ENCODE measurements at regions of chr6 and their contacts with region 1.

Region 1: DNA sequence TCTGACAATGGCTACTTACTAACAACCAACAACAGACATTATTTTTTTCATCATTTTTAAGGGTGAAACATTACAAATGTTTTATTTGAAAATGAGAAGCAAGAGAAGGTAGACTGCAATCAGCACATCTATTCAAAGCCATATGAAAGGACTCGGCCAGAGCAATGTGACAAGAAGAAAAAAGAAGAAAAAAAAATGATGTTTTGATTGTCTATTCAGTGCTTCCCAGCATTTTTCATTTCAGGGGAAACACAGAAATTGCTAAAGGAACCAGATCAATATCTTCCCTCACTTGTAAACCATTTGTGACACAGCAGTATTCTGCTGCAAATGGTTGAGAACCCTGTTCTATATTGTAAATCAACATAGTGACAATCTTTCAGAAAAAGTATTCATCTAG is 270.7 kb downstream of the EYS start:
- DNase-seq: no peak
- ATAC-seq: no peak
- H3K4me3 ChIP-seq: no peak overlapping the region
- H3K27ac ChIP-seq: no peak overlapping the region
- H3K4me1 ChIP-seq: no peaks in the 10 kb centered on the region
- H3K27me3 ChIP-seq: no peaks in the 10 kb centered on the region

Region 2: DNA sequence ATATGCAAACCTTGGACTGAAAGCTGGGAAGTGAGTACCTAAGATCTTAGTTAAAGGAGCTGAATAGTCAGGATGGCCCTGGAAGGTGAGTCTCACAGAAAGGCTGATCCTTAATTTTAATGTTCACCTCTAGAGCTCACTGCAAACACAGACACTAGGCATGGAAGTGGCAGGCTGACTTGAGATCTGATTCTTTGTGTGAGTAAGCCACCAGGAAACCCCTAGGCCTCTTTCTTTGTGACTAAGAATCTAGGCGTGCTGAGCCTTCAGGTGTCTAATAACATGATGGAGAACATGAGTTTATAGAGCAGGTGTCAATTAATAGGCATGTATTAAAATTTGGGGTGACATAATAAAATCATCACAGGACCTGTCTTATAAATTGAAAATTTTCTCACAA is 371.4 kb before region 1 on chr6:
- intact Hi-C with region 1: no loop called
- DNase-seq: no peak
- ATAC-seq: no peak
- H3K4me3 ChIP-seq: no peak overlapping the region
- H3K27ac ChIP-seq: no peak overlapping the region
- H3K4me1 ChIP-seq: no peaks in the 10 kb centered on the region
- H3K27me3 ChIP-seq: no peaks in the 10 kb centered on the region

Region 3: DNA sequence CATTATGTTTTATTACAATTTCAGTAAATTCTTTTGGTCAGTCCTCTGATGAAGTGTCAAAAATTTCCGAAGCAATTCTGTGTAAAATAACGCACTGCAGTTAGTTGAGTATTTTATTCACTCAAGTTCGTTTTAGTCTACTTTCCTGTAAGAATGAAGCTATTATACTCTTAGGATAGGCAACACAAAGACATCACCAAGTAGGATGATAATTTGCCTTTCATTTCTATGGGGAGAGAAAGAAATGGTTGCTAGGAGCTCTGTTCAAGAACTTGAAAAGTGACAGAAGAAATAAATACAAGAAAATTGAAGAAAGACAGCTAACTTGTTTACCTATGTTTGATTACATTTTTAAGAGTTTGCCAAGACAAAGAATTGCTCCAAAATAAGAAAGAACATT is 19.7 kb before region 1 on chr6:
- intact Hi-C with region 1: loop called in 1 of 2 experiments (anchors 2 kb)
- DNase-seq: no peak
- ATAC-seq: no peak
- H3K4me3 ChIP-seq: no peak overlapping the region
- H3K27ac ChIP-seq: no peak overlapping the region
- H3K4me1 ChIP-seq: no peaks in the 10 kb centered on the region
- H3K27me3 ChIP-seq: no peaks in the 10 kb centered on the region

Region 4: GRCh38 chr6:65469650-65470049 is 33.4 kb after region 1 on chr6:
- intact Hi-C with region 1: no loop called
- DNase-seq: no peak
- ATAC-seq: no peak
- H3K4me3 ChIP-seq: no peak overlapping the region
- H3K27ac ChIP-seq: no peak overlapping the region
- H3K4me1 ChIP-seq: no peaks in the 10 kb centered on the region
- H3K27me3 ChIP-seq: no peaks in the 10 kb centered on the region